Panc1 (cell line): ENCODE measurements at regions of chr1 and their contacts with region 1.

Region 1: GRCh38 chr1:41432481-41433280 is 51.8 kb downstream of the EDN2 start:
- DNase-seq: peak; percentile 84
- ATAC-seq: peak; percentile 98
- H3K4me3 ChIP-seq: peak overlapping the region in 1 of 2 experiments; percentile 35; a peak in 2 of 4 replicates
- H3K27ac ChIP-seq: peak overlapping the region; percentile 75; the same call in 1 of the 2 replicates
- H3K4me1 ChIP-seq: peaks cover 18% of the 10 kb centered on the region
- H3K27me3 ChIP-seq: no peaks in the 10 kb centered on the region
- CTCF ChIP-seq: peak; percentile 95

Region 2: DNA sequence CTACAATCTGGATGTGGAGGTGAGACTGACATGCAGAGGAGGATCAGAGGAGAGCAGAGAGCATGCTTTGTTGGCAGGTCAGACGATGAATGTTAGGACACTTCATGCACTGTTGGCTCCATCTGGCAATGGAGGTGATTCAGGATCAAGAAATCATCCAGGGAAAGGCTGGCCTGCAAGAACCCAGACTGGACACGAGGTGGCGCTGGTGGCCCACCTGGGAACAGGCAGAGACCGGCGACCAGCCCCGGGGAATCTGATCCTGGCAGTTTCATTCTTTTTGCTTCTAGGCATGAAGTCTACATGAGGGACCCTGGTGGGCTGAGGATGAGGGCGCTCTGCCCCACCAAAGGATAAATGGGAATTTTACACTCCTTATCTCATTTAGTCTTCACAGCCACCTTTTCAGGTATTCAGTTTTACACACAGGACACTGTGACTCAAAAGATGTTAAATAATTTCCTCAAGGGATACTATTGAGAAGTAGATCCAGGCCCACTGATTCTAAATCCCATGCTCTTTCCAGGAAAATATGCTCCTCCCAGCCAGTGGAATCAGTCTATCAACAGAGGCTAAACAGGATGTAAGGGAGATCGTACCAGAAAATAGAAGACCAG is 164.4 kb before region 1 on chr1:
- CTCF ChIA-PET with region 1: interaction called, 3 read pairs
- POLR2A ChIA-PET with region 1: no interaction called
- in situ Hi-C with region 1: no loop called
- intact Hi-C with region 1: loop called (anchors 2 kb)
- DNase-seq: peak; percentile 63
- ATAC-seq: peak; percentile 85
- H3K4me3 ChIP-seq: no peak overlapping the region
- H3K27ac ChIP-seq: peak overlapping the region; percentile 44; the same call in 1 of the 2 replicates
- H3K4me1 ChIP-seq: no peaks in the 10 kb centered on the region
- H3K27me3 ChIP-seq: no peaks in the 10 kb centered on the region; the same call in 1 of the 2 replicates
- CTCF ChIP-seq: peak; percentile 99

Region 3: DNA sequence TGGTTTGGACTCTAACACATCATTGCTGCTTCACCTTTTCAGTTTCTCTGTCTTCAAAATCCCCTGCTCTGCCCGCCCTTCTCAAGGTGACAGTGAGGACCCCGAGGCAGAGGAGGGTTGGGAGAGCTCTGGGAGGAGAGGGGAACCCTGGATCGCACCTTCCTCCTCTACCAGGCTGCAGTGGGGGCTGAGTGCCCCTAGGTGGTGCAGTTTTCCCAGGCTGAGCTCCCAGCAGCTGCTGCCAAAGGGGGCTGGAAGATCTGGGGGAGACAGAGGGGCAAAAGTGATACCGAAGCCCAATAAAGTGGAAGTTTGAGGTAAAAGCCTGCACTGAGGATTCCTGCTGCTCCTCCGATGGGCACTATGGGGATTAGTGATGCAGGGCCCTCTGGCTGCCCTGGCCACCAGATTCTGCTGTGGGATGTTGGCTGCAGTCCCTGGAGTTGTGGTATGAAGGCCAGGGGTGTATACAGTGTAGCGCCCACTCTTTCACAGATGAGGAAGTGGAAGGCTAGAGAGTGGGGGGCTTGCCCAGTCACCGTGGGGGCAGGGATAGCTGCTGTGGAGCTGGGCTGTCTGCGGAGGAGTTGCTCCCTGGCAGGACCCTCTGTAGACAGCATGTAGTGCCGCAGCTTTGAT is 149.9 kb before region 1 on chr1:
- CTCF ChIA-PET with region 1: interaction called, 9 read pairs
- POLR2A ChIA-PET with region 1: no interaction called
- in situ Hi-C with region 1: no loop called
- intact Hi-C with region 1: loop called (anchors 5 kb)
- DNase-seq: no peak
- ATAC-seq: peak; percentile 84
- H3K4me3 ChIP-seq: no peak overlapping the region
- H3K27ac ChIP-seq: no peak overlapping the region
- H3K4me1 ChIP-seq: no peaks in the 10 kb centered on the region
- H3K27me3 ChIP-seq: peaks cover 14% of the 10 kb centered on the region
- CTCF ChIP-seq: peak; percentile 95

Region 4: DNA sequence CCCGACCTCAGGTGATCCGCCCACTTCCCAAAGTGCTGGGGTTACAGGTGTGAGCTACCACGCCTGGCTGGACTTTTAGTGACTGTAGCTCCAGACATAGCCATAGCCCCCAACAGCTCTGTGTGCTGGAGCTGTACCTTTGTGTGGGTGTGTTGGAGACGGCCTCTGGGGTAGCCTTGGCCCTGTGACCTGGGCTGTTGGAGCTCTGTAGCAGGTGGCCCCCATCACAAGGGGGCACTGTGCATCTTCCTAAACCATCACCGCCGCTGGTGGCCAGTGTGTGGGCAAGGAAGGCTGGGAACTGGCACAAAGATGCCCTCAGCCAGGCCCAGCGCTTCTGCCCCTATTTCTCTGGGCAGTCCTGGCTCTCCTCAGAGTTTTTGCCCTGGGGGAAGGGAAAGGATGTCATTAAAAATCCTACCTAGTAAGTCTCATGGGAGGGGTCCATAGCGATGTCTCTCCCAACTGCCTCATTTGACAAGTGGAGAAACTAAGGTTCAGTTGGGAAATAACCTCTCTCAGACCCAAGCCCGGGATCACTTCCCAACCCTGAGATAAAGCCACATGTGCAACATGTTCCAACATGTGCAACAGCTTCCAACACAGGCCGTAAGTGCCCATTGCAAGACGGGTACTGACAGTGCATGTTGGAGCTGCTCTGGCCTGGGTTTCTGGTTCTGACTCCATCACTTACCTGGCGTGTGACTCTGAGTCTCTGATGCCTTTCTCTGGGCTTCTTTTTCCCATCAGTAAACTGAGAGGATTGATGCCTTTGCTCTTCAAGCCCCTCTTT is 109.7 kb before region 1 on chr1:
- CTCF ChIA-PET with region 1: interaction called, 5 read pairs
- POLR2A ChIA-PET with region 1: no interaction called
- in situ Hi-C with region 1: no loop called
- intact Hi-C with region 1: loop called (anchors 5 kb)
- DNase-seq: peak; percentile 33
- ATAC-seq: peak; percentile 98
- H3K4me3 ChIP-seq: no peak overlapping the region
- H3K27ac ChIP-seq: no peak overlapping the region
- H3K4me1 ChIP-seq: no peaks in the 10 kb centered on the region
- H3K27me3 ChIP-seq: no peaks in the 10 kb centered on the region
- CTCF ChIP-seq: peak; percentile 84